ENCODE measurements at regions of chr5 and their contacts with region 1.

Region 1: DNA sequence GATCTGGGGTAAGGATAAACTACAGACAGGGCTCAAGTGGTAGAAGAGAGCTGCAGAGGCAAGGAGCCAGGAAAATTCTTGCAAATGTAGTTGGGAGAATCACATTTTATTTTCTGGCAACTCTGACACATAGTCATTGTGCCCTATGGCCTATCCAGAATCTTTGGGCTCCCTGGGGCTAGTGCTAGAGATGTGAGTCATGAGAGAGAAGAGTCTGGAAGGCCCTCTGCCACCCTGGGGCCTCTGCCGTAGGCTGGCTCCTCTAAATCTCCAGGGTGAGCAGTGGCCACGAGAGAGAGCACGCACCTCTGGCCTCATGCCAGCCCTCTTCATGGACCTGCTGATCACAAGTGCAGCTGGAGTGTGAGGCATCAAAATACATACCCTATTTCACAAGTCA is 74.3 kb upstream of the SSBP2 start:
- DNase-seq: peak; percentile 64
- ATAC-seq: peak; percentile 60
- H3K4me3 ChIP-seq: no peak overlapping the region
- H3K27ac ChIP-seq: no peak overlapping the region
- H3K4me1 ChIP-seq: peaks cover 10% of the 10 kb centered on the region
- H3K27me3 ChIP-seq: no peaks in the 10 kb centered on the region
- CTCF ChIP-seq: no peak

Region 2: DNA sequence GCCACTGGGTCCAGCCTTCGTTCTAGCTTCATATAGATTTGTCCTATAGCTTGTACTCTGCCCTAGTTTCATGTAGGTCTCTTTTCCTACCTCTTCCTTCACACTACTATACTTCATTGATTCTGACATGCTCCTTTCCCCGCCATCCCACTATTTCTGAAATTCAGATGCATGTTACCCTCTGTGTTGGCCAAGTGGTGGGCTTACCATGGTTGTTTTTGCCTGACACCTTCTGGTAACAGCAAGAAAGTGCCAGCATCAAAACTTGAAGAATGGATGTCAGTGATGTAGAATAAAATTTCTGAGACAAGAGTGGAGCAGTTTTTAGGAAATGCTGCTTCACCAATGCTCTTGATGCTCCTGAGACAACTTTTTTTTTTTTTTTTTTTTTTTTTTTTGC is 1549.9 kb before region 1 on chr5:
- CTCF ChIA-PET with region 1: no interaction called
- POLR2A ChIA-PET with region 1: no interaction called
- intact Hi-C with region 1: no loop called
- DNase-seq: peak; percentile 28
- ATAC-seq: no peak; the same call in 1 of the 2 replicates
- H3K4me3 ChIP-seq: no peak overlapping the region
- H3K27ac ChIP-seq: no peak overlapping the region
- H3K4me1 ChIP-seq: no peaks in the 10 kb centered on the region
- H3K27me3 ChIP-seq: no peaks in the 10 kb centered on the region
- CTCF ChIP-seq: peak; percentile 61

Region 3: DNA sequence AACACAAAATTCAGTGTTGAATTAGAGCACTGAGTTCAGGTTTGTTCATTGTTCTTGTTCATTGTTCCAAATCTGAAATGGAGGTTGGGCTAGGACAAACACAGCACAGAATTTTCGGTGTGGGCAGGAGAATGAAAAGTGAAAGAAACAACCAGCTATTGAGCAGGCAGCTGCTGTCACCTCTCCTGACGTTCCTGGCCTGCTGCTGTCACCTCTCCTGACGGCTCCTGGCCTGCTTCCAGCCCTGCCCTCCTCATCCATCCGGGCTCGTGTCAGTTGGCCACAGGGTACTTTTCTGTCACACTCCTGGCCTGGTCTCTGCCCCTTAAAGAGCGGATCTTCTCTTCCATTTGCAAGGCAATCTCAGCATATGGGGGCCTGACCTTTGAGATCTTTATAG is 637.4 kb before region 1 on chr5:
- CTCF ChIA-PET with region 1: no interaction called
- POLR2A ChIA-PET with region 1: no interaction called
- intact Hi-C with region 1: no loop called
- DNase-seq: no peak
- ATAC-seq: no peak
- H3K4me3 ChIP-seq: no peak overlapping the region
- H3K27ac ChIP-seq: no peak overlapping the region
- H3K4me1 ChIP-seq: no peaks in the 10 kb centered on the region
- H3K27me3 ChIP-seq: 0 out of 2 replicates have a peak, but pooled peaks cover 3% of the 10 kb centered on the region
- CTCF ChIP-seq: no peak

Region 4: GRCh38 chr5:81519217-81519905 is 305.9 kb before region 1 on chr5:
- CTCF ChIA-PET with region 1: no interaction called
- POLR2A ChIA-PET with region 1: interaction called, 13 read pairs
- intact Hi-C with region 1: no loop called
- DNase-seq: no peak
- ATAC-seq: no peak
- H3K4me3 ChIP-seq: no peak overlapping the region
- H3K27ac ChIP-seq: no peak overlapping the region
- H3K4me1 ChIP-seq: no peaks in the 10 kb centered on the region; the same call in 1 of the 2 replicates
- H3K27me3 ChIP-seq: no peaks in the 10 kb centered on the region
- CTCF ChIP-seq: no peak